ENCODE measurements at regions of chr3 and their contacts with region 1.

Region 1: DNA sequence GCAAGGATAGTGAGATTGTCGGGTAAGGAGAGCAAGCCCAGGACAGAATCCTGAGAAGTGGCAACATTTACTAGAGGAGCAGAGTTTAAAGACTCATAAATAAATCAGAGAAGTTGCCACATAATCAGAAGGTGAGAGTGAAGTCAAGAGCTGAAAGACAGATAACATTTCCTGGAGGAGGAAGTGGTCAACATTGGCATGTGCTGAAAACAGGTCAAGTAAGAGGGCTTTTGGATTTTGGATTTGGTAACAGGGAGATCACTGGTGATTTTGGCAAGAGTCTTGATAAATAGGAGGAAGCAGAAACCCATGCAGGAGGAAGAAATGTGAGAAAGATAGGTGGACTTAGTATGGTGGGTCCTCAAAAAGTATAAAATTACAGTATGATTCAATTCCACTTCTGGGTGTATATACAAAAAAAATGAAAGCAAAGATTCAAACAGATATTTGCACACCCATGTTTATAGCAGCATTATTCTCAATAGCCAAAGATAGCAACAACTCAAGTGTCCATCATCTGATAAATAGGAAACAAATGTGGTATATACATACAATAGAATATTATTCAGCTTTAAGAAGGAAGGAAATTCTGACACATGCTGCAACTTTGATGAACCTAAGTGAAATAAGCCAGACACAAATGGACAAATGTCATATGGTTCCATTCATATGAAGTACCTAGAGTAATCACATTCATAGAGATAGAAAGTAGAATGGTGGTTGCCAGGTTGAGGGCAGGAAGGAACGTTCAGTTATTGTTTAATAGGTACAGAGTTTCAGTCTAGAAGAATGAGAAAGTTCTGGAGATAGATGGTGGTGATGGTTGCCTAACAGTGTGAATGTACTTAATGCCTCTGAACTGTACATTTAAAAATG is 27.3 kb upstream of the MBNL1 start:
- DNase-seq: no peak
- H3K4me3 ChIP-seq: no peak overlapping the region
- H3K27ac ChIP-seq: no peak overlapping the region
- H3K4me1 ChIP-seq: no peaks in the 10 kb centered on the region
- H3K27me3 ChIP-seq: no peaks in the 10 kb centered on the region
- CTCF ChIP-seq: no peak
- POLR2A ChIP-seq: no peak

Region 2: GRCh38 chr3:152159328-152159727 is 82.1 kb before region 1 on chr3:
- intact Hi-C with region 1: no loop called
- DNase-seq: no peak
- H3K4me3 ChIP-seq: no peak overlapping the region
- H3K27ac ChIP-seq: no peak overlapping the region
- H3K4me1 ChIP-seq: no peaks in the 10 kb centered on the region
- H3K27me3 ChIP-seq: no peaks in the 10 kb centered on the region
- CTCF ChIP-seq: no peak
- POLR2A ChIP-seq: no peak

Region 3: DNA sequence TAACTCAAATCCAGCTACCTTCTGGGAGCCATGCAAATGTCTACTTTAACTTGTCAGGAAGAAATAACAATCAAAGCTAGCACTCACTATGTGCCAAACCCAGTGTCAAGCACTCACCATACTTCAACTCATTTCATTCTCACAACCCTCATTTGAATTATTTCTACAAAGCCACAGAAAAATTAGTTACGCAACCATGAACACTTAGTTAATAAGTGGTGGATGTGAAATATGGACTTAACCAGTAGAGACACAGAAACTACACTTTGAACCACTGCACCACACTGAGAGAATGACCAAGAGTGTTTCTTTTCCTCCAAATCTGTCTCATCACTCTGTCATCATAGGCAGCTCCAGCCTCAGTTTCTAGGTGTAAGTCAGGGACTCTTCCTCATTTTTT is 63.6 kb before region 1 on chr3:
- intact Hi-C with region 1: loop called (anchors 10 kb)
- DNase-seq: no peak
- H3K4me3 ChIP-seq: no peak overlapping the region
- H3K27ac ChIP-seq: no peak overlapping the region
- H3K4me1 ChIP-seq: no peaks in the 10 kb centered on the region
- H3K27me3 ChIP-seq: no peaks in the 10 kb centered on the region
- CTCF ChIP-seq: no peak
- POLR2A ChIP-seq: no peak